Activated CD4-positive, alpha-beta memory T cell treated with anti-CD3 and anti-CD28 coated beads for 36 hours (primary cell): ENCODE measurements at regions of chr1 and their contacts with region 1.

Region 1: GRCh38 chr1:31891280-31891679 is 46.9 kb downstream of the PTP4A2 start:
- DNase-seq: peak; percentile 78
- H3K4me3 Mint-ChIP-seq: no peak overlapping the region
- H3K27ac Mint-ChIP-seq: peak overlapping the region; percentile 73
- H3K4me1 Mint-ChIP-seq: peaks cover 35% of the 10 kb centered on the region
- H3K27me3 Mint-ChIP-seq: no peaks in the 10 kb centered on the region

Region 2: GRCh38 chr1:31605908-31606427 is 285.3 kb before region 1 on chr1:
- CTCF ChIA-PET with region 1: no interaction called
- POLR2A ChIA-PET with region 1: no interaction called
- intact Hi-C with region 1: no loop called
- DNase-seq: peak; percentile 74
- H3K4me3 Mint-ChIP-seq: no peak overlapping the region
- H3K27ac Mint-ChIP-seq: peak overlapping the region; percentile 35
- H3K4me1 Mint-ChIP-seq: peaks cover 11% of the 10 kb centered on the region
- H3K27me3 Mint-ChIP-seq: peaks cover 6% of the 10 kb centered on the region

Region 3: DNA sequence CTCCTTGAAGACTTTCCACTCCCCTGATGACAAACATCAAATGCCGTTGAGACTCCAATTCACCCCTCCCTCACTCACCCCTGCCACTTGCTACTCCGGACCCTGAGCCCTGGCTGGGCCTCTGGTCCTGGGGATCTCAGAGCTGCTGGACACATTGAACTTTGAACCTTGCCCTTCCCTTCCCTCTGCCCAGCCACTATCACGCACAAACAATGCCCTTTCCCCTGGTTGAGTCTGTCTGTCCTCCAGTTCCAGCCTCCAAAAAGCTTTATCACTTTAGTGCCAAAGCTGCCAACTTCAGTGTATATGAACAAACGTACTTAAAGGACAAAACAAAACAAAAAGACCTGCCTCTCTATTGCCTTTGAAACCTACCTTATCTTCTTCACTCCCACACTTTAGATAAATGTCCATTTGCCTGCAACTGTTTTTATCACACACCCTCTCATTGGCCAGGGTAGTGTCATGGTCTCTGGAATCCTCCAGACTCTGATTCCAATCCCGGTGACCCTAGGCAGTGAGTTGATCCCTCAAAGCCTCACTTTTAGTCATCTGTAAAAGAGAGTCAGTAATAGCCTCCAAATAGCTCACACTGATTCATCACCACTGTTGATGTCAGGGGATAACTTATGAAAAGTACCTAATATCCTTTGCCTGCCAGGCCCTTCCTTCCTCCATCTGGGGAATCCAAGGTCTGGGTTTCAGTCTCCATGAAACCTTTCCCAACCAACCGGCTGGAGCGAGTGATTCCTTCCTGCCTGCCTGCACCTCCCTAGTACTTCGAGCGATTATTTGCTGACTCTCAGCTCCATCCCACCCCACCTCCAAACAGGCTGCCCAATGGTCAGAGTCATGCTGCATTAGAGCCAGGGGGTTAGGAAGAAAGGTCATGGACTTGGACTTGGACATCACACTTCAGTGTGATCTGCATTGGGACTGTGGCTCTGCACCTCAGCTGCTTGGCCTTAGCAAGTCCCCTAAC is 59.6 kb before region 1 on chr1:
- CTCF ChIA-PET with region 1: no interaction called
- POLR2A ChIA-PET with region 1: no interaction called
- intact Hi-C with region 1: loop called (anchors 1 kb)
- DNase-seq: no peak
- H3K4me3 Mint-ChIP-seq: no peak overlapping the region
- H3K27ac Mint-ChIP-seq: no peak overlapping the region
- H3K4me1 Mint-ChIP-seq: peaks cover 17% of the 10 kb centered on the region
- H3K27me3 Mint-ChIP-seq: no peaks in the 10 kb centered on the region

Region 4: DNA sequence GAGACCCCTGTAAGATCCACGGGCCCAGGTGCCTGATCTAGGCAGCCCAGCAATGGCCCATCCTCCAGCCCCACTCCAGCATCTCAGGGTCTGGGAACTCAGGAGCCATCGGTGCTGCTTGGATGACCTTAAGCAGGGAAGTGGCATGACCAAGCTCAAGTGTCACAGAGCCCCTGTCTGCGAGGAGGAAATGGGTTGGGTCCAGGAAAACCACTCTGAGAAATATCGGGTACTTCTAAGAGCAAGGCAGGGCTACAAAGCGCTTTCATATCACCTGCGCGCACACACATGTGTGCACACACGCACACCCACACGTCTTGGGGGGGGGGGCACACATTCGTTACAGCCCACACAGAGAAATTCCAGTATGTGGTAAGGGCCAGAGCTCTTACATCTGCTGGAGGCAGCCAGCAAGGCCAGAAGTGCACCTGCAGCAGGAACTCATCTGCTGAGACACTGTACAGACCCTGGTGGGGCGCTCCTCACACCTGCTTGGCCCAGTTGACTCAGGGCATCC is 42.8 kb before region 1 on chr1:
- CTCF ChIA-PET with region 1: no interaction called
- POLR2A ChIA-PET with region 1: no interaction called
- intact Hi-C with region 1: loop called (anchors 5 kb)
- DNase-seq: peak; percentile 47
- H3K4me3 Mint-ChIP-seq: no peak overlapping the region
- H3K27ac Mint-ChIP-seq: no peak overlapping the region
- H3K4me1 Mint-ChIP-seq: peaks cover 43% of the 10 kb centered on the region
- H3K27me3 Mint-ChIP-seq: no peaks in the 10 kb centered on the region

Region 5: DNA sequence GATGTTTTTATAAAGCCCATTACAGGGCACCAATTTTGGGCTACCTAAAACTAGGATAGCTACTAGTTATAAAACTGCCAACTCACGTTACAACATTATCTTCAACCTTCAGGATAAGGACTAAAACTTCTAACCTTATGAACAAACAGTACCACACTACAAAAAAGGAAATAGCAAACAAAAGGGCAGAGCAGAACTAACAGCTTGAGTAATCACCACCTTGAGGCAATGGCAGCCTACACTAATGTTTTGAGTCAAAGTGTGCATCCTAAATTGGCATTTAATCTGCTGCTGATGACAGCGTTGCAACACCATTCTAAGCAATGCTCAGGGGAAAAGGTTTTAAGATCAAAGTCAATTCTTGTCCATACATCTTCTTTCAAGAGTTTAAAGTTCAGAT is 19.7 kb after region 1 on chr1:
- CTCF ChIA-PET with region 1: interaction called, 3 read pairs
- POLR2A ChIA-PET with region 1: interaction called, 10 read pairs
- intact Hi-C with region 1: loop called (anchors 1 kb)
- DNase-seq: peak; percentile 49
- H3K4me3 Mint-ChIP-seq: no peak overlapping the region
- H3K27ac Mint-ChIP-seq: peak overlapping the region; percentile 69
- H3K4me1 Mint-ChIP-seq: peaks cover 51% of the 10 kb centered on the region
- H3K27me3 Mint-ChIP-seq: no peaks in the 10 kb centered on the region

Region 6: DNA sequence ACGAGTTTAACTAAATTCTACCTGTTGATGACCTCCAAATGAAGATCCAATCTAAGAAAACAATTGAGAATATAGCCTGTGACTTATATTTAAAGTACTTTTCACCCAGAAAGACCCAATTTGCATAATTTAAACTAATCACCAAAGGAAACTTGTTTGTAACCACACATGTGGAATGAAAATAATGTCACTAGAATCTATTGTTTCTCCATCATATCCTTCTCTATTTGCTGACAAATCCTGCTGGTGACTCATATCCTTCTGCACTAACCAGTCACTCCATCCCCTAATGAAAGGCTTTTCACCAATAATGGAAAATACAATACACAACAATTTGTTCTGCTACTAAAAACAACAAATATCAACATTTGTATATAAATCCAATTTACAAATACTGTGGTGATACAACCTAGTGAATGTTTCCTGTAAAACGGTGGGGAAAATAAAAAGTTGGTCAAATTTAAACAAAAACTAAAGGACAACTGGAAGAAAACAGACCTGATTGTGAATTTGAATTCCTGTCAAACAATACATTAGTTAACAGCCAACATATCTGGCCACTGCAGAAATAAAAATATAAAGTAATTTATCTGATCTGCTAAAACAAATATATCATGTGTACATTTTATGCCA is 40.4 kb after region 1 on chr1:
- CTCF ChIA-PET with region 1: interaction called, 3 read pairs
- POLR2A ChIA-PET with region 1: interaction called, 8 read pairs
- intact Hi-C with region 1: loop called (anchors 1 kb)
- DNase-seq: no peak
- H3K4me3 Mint-ChIP-seq: peak overlapping the region; percentile 41
- H3K27ac Mint-ChIP-seq: peak overlapping the region; percentile 96
- H3K4me1 Mint-ChIP-seq: peaks cover 89% of the 10 kb centered on the region
- H3K27me3 Mint-ChIP-seq: no peaks in the 10 kb centered on the region

Region 7: DNA sequence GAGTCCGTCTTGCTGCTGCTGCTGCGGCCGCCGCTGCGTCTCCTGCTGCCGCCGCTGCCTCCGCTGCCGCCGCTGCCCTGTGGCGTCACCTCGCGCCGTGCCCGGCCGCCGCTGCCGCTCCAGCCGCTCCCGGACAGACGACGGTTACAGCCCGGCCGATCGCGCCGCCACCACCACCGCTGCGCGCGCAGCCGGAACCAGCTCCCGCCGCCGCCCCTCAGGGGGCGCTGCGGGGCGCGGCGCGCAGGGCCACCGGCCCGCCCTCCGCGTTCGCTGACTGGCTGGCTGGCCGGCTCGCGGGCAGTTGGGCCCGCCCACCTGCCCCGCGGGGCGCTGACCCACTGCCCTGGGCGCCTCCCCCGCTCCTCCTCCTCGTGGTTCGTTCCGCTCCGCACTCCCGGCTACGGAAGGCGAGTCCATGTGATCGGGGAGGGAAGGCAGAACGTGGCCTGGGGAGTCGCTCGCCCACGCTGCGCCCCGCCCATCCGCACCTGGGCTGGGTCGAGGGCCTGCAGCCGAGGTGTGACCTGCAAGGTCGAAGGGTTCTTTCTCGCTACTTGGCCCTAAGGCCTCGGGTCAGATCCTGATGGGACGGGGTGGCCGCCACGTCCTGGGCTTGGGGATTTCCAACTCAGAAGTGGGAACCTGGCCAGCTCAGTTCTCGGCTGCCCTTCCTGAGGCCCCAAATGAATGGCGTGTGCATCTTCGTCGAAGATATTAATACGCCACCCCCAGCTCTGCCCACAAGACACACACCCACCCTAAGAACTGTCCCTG is 47.1 kb after region 1 on chr1 and contains the start of gene PTP4A2:
- CTCF ChIA-PET with region 1: interaction called, 4 read pairs
- POLR2A ChIA-PET with region 1: interaction called, 4 read pairs
- intact Hi-C with region 1: loop called (anchors 1 kb)
- DNase-seq: peak; percentile 94
- H3K4me3 Mint-ChIP-seq: peak within 1 kb of the TSS; percentile 98
- H3K27ac Mint-ChIP-seq: peak within 1 kb of the TSS; percentile 96
- H3K4me1 Mint-ChIP-seq: peaks cover 66% of the 10 kb centered on the region
- H3K27me3 Mint-ChIP-seq: no peaks in the 10 kb centered on the region
- total RNA-seq, gene PTP4A2: 275 to 285 TPM

Region 8: GRCh38 chr1:32426489-32427255 is 535.4 kb after region 1 on chr1:
- CTCF ChIA-PET with region 1: no interaction called
- POLR2A ChIA-PET with region 1: no interaction called
- intact Hi-C with region 1: no loop called
- DNase-seq: no peak
- H3K4me3 Mint-ChIP-seq: no peak overlapping the region
- H3K27ac Mint-ChIP-seq: no peak overlapping the region
- H3K4me1 Mint-ChIP-seq: no peaks in the 10 kb centered on the region
- H3K27me3 Mint-ChIP-seq: peaks cover 32% of the 10 kb centered on the region